Naive thymus-derived CD8-positive, alpha-beta T cell (primary cell): ENCODE measurements at regions of chr21 and their contacts with region 1.

Region 1: GRCh38 chr21:34198231-34199120 is 125.1 kb downstream of the MRPS6 start:
- DNase-seq: peak in 6 of 10 donors; percentile 7 to 50 (median 32)
- ATAC-seq: peak; percentile 71 to 82
- H3K4me3 Mint-ChIP-seq: peak overlapping the region; percentile 29 to 79 (median 64)
- H3K27ac Mint-ChIP-seq: peak overlapping the region; percentile 68 to 91 (median 82)
- H3K4me1 Mint-ChIP-seq: peaks cover 24 to 57% (median 53%) of the 10 kb centered on the region in 4 donors
- H3K27me3 Mint-ChIP-seq: peaks cover 0 to 2% (median 0%) of the 10 kb centered on the region in 5 donors

Region 2: DNA sequence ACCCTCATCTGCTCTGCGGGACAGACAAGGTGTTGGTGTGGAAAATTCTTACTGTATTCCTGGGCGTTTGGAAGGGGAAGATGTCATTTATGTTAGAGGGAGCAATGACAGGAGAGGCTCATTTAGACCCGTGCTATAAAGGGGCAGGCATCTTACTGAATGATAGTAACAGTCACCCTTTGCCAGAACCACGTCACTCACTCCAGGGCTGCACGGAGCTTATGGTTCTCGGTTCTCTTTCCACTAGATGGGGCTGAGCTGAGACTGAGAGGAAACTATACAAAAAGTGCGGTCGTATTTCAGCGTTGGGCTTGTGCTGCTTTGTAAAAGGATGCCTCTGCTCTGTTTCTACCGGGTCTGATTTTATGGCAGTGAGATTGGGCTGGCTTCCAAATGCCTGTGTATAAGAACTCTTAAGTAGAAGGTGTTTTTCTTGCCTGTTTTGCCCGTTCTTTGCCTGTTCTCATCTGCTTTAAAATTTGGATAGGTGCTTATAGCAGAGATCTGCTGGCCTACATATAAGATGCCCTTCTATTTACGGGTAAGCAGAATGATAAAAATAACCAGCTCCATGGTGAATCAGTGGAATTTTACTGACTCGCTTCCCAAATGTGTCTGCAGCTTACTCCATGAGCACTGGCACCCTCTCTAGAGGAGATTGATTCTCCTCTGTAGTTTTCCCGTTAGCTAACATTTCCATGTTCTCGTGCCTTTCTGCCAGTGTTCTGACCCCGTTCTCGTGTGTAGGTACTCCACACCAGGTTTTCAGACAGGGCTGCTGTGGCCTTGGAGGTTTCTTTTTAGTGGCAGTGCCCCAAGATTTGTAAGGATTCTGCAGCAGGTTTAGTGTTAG is 69.2 kb before region 1 on chr21:
- POLR2A ChIA-PET with region 1: interaction called, 10 read pairs
- DNase-seq: peak; percentile 30 to 85 (median 69)
- ATAC-seq: peak; percentile 89 to 91
- H3K4me3 Mint-ChIP-seq: peak overlapping the region; percentile 62 to 82 (median 70)
- H3K27ac Mint-ChIP-seq: peak overlapping the region; percentile 75 to 95 (median 88)
- H3K4me1 Mint-ChIP-seq: peaks cover 69 to 93% (median 92%) of the 10 kb centered on the region in 4 donors
- H3K27me3 Mint-ChIP-seq: no peaks in the 10 kb centered on the region

Region 3: GRCh38 chr21:34148419-34148804 is 50.1 kb before region 1 on chr21:
- POLR2A ChIA-PET with region 1: no interaction called
- DNase-seq: no peak
- ATAC-seq: no peak
- H3K4me3 Mint-ChIP-seq: no peak overlapping the region
- H3K27ac Mint-ChIP-seq: peak overlapping the region in 1 of 10 donors; percentile 37
- H3K4me1 Mint-ChIP-seq: peaks cover 20 to 25% (median 22%) of the 10 kb centered on the region in 4 donors
- H3K27me3 Mint-ChIP-seq: no peaks in the 10 kb centered on the region

Region 4: DNA sequence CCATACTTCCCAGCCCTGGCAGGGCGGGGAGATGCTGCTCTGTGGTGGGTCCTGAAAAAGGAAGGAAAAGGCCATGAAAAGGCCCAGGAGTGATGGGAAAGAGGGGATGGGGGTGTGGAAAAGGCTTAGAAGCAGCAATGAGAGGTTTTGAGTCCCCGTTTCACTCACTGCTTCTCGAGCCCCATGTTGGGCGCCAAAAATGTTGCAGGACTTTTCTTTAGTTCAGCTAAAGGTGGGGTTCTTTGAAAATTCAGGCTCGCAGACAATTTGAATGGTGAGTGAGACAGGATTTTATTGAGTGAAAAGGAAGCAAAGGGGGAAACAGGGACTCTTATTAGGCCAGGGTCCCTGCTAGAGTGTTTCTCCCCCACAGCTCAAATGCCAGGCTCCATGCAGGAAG is 32.0 kb before region 1 on chr21:
- POLR2A ChIA-PET with region 1: no interaction called
- DNase-seq: peak in 2 of 10 donors; percentile 4 to 8
- ATAC-seq: no peak
- H3K4me3 Mint-ChIP-seq: no peak overlapping the region
- H3K27ac Mint-ChIP-seq: no peak overlapping the region
- H3K4me1 Mint-ChIP-seq: no peaks in the 10 kb centered on the region
- H3K27me3 Mint-ChIP-seq: no peaks in the 10 kb centered on the region